CD14-positive monocyte (primary cell): ENCODE measurements at regions of chr6 and their contacts with region 1.

Region 1: GRCh38 chr6:27078734-27079357 is 168.7 kb upstream of the PRSS16 start:
- DNase-seq: peak; percentile 14 to 16 (median 15)
- H3K4me3 ChIP-seq: no peak overlapping the region
- H3K4me3 Mint-ChIP-seq: peak overlapping the region in 1 of 2 donors; percentile 75
- H3K27ac ChIP-seq: no peak overlapping the region
- H3K27ac Mint-ChIP-seq: no peak overlapping the region
- H3K4me1 ChIP-seq: peaks cover 0 to 6% of the 10 kb centered on the region in 2 donors
- H3K4me1 Mint-ChIP-seq: peaks cover 5% of the 10 kb centered on the region
- H3K27me3 ChIP-seq: peaks cover 25 to 36% of the 10 kb centered on the region in 2 donors
- H3K27me3 Mint-ChIP-seq: peaks cover 30 to 39% (median 33%) of the 10 kb centered on the region in 3 donors
- CTCF ChIP-seq: peak; percentile 59

Region 2: GRCh38 chr6:26607434-26608230 is 471.2 kb before region 1 on chr6:
- intact Hi-C with region 1: loop called in 1 of 2 experiments (anchors 5 kb)
- DNase-seq: peak in 2 of 3 donors; percentile 27 to 36
- H3K4me3 ChIP-seq: no peak overlapping the region
- H3K4me3 Mint-ChIP-seq: peak overlapping the region; percentile 28 to 46
- H3K27ac ChIP-seq: no peak overlapping the region
- H3K27ac Mint-ChIP-seq: no peak overlapping the region
- H3K4me1 ChIP-seq: no peaks in the 10 kb centered on the region
- H3K4me1 Mint-ChIP-seq: peaks cover 3% of the 10 kb centered on the region
- H3K27me3 ChIP-seq: peaks cover 12 to 24% of the 10 kb centered on the region in 2 donors
- H3K27me3 Mint-ChIP-seq: peaks cover 20 to 28% (median 21%) of the 10 kb centered on the region in 3 donors
- CTCF ChIP-seq: peak; percentile 63